ENCODE measurements at regions of chr9 and their contacts with region 1.

Region 1: DNA sequence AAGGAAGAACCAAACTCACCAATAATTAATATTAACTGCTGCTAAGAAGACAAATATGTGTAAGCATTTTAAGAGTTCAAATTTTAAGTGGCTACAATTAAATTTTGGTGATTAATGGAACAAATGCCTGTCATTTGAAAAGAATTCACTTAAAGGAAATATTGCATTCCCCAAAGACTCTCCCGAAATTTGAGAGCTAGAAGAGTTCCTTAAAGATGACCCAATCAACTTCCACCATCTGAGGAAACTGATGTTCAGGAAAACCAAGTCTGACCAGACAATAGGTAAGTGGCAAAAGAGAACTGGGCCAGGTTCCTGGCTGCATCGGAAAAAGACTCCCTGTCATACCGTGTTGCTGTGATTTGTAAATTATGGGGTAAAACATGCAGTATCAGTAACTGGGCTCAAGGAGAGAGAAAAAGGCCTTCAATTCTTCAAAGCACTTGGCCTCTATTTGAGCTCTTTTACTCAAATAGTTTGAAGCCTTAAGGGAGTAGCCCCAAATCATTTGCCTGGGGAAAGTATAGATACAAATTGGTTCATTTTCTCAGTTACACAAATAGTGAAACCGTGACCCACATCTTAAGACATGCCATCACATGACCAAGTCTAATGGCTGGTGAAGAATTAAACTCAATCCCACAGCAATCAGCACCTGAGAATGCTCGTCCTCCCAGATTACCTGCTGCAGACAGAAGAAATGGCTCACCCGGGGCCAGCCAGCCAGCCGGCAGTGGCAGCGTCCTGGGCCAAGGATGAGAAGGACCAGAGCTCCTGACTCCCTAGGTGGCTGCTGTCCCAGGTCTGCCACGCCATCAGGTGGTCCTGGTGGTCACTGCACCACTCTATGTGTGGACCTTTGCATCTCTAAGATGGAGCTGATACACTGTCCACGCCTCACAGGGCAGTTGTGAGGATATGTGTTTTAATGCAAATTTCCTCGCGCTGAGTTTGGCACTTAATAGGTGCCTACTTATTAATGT is 162.9 kb downstream of the TTLL11 start:
- DNase-seq: peak; percentile 79
- ATAC-seq: peak; percentile 97
- H3K4me3 Mint-ChIP-seq: no peak overlapping the region
- H3K27ac Mint-ChIP-seq: no peak overlapping the region
- H3K4me1 Mint-ChIP-seq: peaks cover 5% of the 10 kb centered on the region
- H3K27me3 Mint-ChIP-seq: no peaks in the 10 kb centered on the region; the same call in 1 of the 2 replicates
- CTCF ChIP-seq: peak; percentile 32

Region 2: GRCh38 chr9:121640076-121640475 is 290.1 kb before region 1 on chr9:
- CTCF ChIA-PET with region 1: interaction called, 13 read pairs
- POLR2A ChIA-PET with region 1: no interaction called
- DNase-seq: peak; percentile 76
- ATAC-seq: peak; percentile 75
- H3K4me3 Mint-ChIP-seq: no peak overlapping the region
- H3K27ac Mint-ChIP-seq: 0 out of 2 replicates have a peak overlapping the region, but pooled peaks have one; percentile 23
- H3K4me1 Mint-ChIP-seq: peaks cover 40% of the 10 kb centered on the region
- H3K27me3 Mint-ChIP-seq: no peaks in the 10 kb centered on the region
- CTCF ChIP-seq: no peak; the same call in 1 of the 2 replicates

Region 3: GRCh38 chr9:121735065-121735789 is 195.0 kb before region 1 on chr9:
- CTCF ChIA-PET with region 1: interaction called, 44 read pairs
- POLR2A ChIA-PET with region 1: no interaction called
- DNase-seq: peak; percentile 76
- ATAC-seq: peak; percentile 81
- H3K4me3 Mint-ChIP-seq: peak overlapping the region; percentile 85
- H3K27ac Mint-ChIP-seq: peak overlapping the region; percentile 86
- H3K4me1 Mint-ChIP-seq: peaks cover 66% of the 10 kb centered on the region
- H3K27me3 Mint-ChIP-seq: peaks cover 3% of the 10 kb centered on the region; the same call in 1 of the 2 replicates
- CTCF ChIP-seq: no peak; the same call in 1 of the 2 replicates

Region 4: GRCh38 chr9:121819428-121820231 is 110.6 kb before region 1 on chr9:
- CTCF ChIA-PET with region 1: interaction called, 12 read pairs
- POLR2A ChIA-PET with region 1: no interaction called
- DNase-seq: peak; percentile 58
- ATAC-seq: peak; percentile 69
- H3K4me3 Mint-ChIP-seq: peak overlapping the region; percentile 24; the same call in 1 of the 2 replicates
- H3K27ac Mint-ChIP-seq: no peak overlapping the region
- H3K4me1 Mint-ChIP-seq: peaks cover 50% of the 10 kb centered on the region
- H3K27me3 Mint-ChIP-seq: no peaks in the 10 kb centered on the region
- CTCF ChIP-seq: no peak

Region 5: DNA sequence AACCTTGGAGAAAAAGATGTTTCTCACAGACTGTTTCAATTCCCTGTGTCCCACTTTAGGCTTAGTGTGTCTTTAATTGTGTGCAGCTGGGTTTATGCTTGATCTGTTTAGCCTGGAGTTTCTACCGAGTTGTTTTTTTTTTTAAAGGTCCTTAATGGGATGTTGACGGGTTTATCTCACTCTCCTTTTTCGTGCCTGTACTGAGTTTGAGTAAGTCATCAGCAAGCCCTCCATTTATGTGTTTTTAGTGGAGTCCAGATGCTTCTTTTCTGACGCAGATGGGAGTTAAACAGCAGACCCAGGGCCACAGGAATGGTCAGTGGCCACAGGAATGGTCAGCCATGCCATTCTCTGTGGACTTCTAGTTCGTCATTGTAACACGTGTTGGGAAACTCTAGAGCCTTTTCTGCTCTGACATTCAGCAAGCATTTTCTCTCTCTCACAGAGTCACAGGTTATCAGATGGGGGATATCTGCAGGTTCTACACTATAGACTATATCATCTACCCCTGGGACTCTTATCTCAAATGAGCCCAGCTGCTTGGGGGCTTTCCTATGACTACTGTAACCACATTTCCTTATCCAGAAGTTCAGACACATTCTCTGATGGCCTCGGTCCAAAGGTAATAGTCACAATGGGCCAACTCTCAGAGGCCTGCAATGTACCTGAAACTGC is 27.6 kb before region 1 on chr9:
- CTCF ChIA-PET with region 1: interaction called, 11 read pairs
- POLR2A ChIA-PET with region 1: no interaction called
- DNase-seq: no peak
- ATAC-seq: no peak
- H3K4me3 Mint-ChIP-seq: no peak overlapping the region
- H3K27ac Mint-ChIP-seq: no peak overlapping the region
- H3K4me1 Mint-ChIP-seq: no peaks in the 10 kb centered on the region
- H3K27me3 Mint-ChIP-seq: peaks cover 4% of the 10 kb centered on the region; the same call in 1 of the 2 replicates
- CTCF ChIP-seq: no peak

Region 6: GRCh38 chr9:121997791-121998190 is 67.6 kb after region 1 on chr9:
- CTCF ChIA-PET with region 1: interaction called, 11 read pairs
- POLR2A ChIA-PET with region 1: no interaction called
- DNase-seq: no peak
- ATAC-seq: no peak
- H3K4me3 Mint-ChIP-seq: no peak overlapping the region
- H3K27ac Mint-ChIP-seq: no peak overlapping the region
- H3K4me1 Mint-ChIP-seq: peaks cover 17% of the 10 kb centered on the region
- H3K27me3 Mint-ChIP-seq: peaks cover 47% of the 10 kb centered on the region
- CTCF ChIP-seq: no peak